Heart right ventricle (tissue), 16 donors: ENCODE measurements at regions of chr5 and their contacts with region 1.

Region 1: DNA sequence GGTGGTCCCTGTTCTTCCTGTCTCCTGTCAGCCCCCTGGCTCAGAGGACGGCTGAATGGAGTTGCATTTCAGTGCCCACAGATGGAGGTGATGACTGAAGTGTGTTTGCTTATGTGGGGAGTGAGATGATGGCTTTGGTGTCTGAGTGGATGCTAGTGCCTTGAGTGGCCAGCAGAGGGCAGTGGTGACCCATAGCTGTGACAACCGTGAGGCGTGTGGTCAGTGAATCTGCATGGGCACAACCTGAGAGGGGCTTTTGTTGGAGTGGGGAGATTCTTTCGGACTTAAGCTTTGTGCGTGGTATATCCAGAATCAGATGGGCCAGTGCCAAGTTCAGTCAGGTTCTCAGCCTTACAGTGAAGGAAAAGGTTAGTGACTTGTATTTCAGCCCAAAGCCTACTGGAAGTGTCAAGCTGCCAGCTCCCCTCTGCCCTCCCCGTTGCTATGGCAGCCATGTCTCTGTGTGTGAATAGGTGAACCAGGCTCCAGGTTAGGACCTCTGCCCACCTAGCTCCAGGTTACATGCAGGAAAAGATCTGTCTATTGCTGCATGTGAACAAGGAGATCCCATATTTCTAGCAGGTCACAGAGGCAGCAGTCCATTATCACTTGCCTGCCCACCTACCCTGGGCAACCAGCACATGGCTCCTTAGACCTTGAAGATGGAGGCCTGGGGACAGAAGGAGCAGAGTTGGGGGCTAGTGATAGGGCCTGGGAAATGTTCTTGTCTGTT is 14.7 kb upstream of the CXXC5 start:
- DNase-seq: peak; percentile 64 to 68
- ATAC-seq: peak in 7 of 8 donors; percentile 13 to 41 (median 29)
- H3K4me3 ChIP-seq: no peak overlapping the region
- H3K27ac ChIP-seq: no peak overlapping the region
- H3K4me1 ChIP-seq: peaks cover 15 to 44% (median 35%) of the 10 kb centered on the region in 9 donors
- H3K27me3 ChIP-seq: no peaks in the 10 kb centered on the region
- CTCF ChIP-seq: peak; percentile 93 to 99 (median 96)

Region 2: DNA sequence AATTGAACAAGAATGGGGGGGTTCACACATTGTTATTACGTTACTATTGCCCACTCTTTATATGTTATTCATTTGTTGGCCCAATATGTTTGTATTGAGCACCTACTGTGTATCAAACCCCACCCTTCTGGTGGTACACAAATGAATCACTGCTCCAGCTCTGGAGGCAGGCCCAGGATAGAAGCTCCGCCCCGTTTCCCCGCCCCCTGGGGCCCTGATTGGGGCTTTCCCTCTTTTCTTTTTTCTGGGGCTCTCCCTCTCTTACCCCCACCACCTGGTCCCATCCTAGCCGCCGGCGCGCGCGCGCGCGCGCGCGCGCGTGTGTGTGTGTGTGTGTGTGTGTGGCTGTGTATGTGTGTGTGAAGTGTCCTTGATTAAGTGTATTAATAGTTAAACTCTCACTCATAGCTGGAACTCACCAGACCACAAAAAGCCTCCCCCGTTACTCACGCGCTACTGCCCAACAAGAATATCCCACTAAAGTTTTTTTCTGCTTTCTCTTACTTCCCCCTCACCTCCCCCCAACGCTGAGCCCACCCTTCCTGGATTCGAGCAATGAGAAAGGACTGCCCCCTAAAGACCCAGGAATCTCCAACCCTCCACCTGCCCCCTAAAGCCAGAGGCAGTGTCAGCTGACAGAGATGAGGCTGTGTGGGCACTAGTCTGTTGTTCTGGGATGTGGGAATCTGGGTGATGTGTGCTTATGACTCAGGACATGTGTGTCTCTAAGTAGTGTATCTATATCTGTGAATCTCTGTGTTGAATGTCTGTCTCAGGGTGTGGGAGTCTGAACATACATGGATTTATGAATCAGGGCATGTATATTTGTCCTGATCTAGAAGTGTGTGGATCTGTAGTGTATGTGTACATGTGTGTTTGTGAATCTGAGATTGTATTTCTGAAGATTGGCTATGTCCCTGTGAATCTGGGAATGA is 18.7 kb after region 1 on chr5:
- intact Hi-C with region 1: loop called in 3 of 10 experiments (anchors 1 to 2 kb)
- DNase-seq: peak; percentile 78 to 81
- ATAC-seq: peak in 7 of 8 donors; percentile 9 to 46 (median 36)
- H3K4me3 ChIP-seq: peak overlapping the region in 6 of 10 donors; percentile 20 to 99 (median 96)
- H3K27ac ChIP-seq: peak overlapping the region; percentile 66 to 97 (median 92)
- H3K4me1 ChIP-seq: peaks cover 40 to 88% (median 79%) of the 10 kb centered on the region in 9 donors
- H3K27me3 ChIP-seq: peaks cover 0 to 48% (median 0%) of the 10 kb centered on the region in 7 donors
- CTCF ChIP-seq: no peak

Region 3: DNA sequence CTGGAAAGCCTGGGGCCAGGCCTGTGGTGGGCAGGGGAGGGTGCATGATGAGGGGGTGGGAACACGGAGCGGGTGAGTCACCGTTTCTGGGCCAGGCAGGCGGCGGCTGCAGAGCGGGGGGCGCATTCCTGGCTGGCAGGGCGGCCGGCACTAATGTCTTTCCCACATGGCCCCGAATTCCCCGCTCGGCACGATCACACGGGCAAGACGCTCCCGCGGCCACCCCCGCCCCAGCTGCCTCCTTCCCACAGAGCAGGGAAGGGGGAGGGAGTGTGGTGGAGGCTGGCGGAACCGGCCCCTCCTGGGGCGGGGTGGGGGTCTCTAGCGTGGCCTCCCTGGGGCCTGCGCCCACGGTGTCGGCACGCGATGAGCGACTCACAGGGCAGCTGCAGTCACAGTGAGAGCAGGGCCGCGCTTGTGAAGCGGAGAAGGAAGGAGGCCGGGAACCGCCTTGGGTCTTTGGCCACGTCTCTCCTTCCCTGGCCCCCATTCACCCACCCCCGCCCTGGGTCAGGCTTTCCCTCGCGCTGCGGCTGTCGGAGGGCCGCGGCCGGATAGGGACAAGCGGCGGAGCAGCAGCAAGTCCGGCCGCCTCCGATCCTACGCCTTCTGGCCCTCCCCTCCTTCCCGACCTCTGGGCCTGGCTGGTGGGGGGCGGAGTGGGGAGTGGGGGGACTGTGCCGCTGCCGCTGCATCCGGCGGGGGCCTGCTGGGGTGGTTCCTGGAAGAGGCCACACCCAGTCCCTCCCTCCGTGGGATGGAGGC is 63.6 kb after region 1 on chr5:
- intact Hi-C with region 1: loop called in 4 of 10 experiments (anchors 2 to 5 kb)
- DNase-seq: peak; percentile 85 to 87
- ATAC-seq: peak; percentile 79 to 90 (median 83)
- H3K4me3 ChIP-seq: peak overlapping the region; percentile 20 to 63 (median 45)
- H3K27ac ChIP-seq: peak overlapping the region; percentile 87 to 98 (median 90)
- H3K4me1 ChIP-seq: peaks cover 15 to 78% (median 51%) of the 10 kb centered on the region in 9 donors
- H3K27me3 ChIP-seq: peaks cover 0 to 36% (median 0%) of the 10 kb centered on the region in 7 donors
- CTCF ChIP-seq: no peak

Region 4: GRCh38 chr5:139765409-139766217 is 132.2 kb after region 1 on chr5:
- intact Hi-C with region 1: loop called (anchors 1 to 5 kb)
- DNase-seq: peak; percentile 73 to 86
- ATAC-seq: peak; percentile 84 to 95 (median 90)
- H3K4me3 ChIP-seq: peak overlapping the region; percentile 16 to 65 (median 53)
- H3K27ac ChIP-seq: peak overlapping the region in 3 of 10 donors; percentile 2 to 67 (median 3)
- H3K4me1 ChIP-seq: peaks cover 5 to 29% (median 18%) of the 10 kb centered on the region in 9 donors
- H3K27me3 ChIP-seq: peaks cover 4 to 28% (median 23%) of the 10 kb centered on the region in 7 donors
- CTCF ChIP-seq: peak; percentile 92 to 99 (median 98)

Region 5: GRCh38 chr5:139863855-139864558 is 230.5 kb after region 1 on chr5:
- intact Hi-C with region 1: loop called in 1 of 10 experiments (anchors 10 kb)
- DNase-seq: peak; percentile 48 to 65
- ATAC-seq: peak; percentile 43 to 86 (median 77)
- H3K4me3 ChIP-seq: no peak overlapping the region
- H3K27ac ChIP-seq: peak overlapping the region in 4 of 10 donors; percentile 11 to 49 (median 24)
- H3K4me1 ChIP-seq: peaks cover 0 to 23% (median 11%) of the 10 kb centered on the region in 9 donors
- H3K27me3 ChIP-seq: no peaks in the 10 kb centered on the region
- CTCF ChIP-seq: peak; percentile 81 to 92 (median 89)

Region 6: DNA sequence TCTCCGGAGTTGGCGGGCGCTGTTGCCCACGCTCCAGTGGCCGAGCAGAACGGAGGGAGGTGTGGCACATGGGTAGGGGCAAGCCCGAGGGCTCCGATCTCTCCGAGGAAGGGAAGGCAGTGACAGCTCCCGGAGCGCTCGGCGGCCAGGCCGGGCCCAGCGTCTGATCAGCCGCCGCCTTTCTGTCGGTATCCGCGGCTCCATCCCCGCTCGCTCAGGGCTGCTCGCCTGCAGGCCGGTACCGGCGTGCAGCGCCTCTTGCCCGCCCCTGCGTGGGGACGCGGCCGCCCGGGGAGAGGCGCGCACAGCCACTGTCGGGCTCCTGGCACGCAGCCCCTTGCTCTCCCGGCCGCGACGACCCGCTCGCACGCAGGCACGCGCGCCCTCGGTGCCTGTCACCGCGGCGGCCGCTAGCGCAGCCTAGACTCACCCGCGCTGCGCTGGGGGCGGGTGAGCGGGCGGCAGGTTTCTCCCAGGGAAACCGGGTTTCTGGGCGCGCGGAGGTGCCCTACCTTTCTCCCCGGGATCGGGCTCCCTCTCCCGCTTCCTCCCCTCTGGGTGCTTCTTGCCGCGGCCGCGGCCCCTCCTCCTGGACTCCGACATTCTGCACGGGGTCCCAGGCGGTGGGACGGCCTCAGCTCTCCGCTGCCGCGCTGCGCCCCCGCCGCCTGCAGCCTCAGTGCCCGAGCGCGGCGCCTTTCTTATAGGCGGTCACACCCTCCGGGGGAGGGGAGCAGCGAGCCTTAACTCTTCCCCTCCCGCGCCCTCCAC is 270.5 kb after region 1 on chr5:
- intact Hi-C with region 1: no loop called
- DNase-seq: peak in 1 of 2 donors; percentile 32
- ATAC-seq: peak; percentile 41 to 75 (median 60)
- H3K4me3 ChIP-seq: peak overlapping the region; percentile 28 to 61 (median 52)
- H3K27ac ChIP-seq: no peak overlapping the region
- H3K4me1 ChIP-seq: peaks cover 15 to 30% (median 21%) of the 10 kb centered on the region in 9 donors
- H3K27me3 ChIP-seq: peaks cover 0 to 58% (median 17%) of the 10 kb centered on the region in 7 donors
- CTCF ChIP-seq: no peak